ENCODE measurements at regions of chr14 and their contacts with region 1.

Region 1: GRCh38 chr14:61269321-61270083 is 11.6 kb downstream of the TMEM30B start:
- DNase-seq: peak; percentile 77 to 91 (median 87)
- H3K4me3 ChIP-seq: peak overlapping the region in 6 of 7 experiments; percentile 47 to 75 (median 59)
- H3K27ac ChIP-seq: no peak overlapping the region
- H3K4me1 ChIP-seq: peaks cover 0 to 5% (median 4%) of the 10 kb centered on the region in 4 experiments
- H3K27me3 ChIP-seq: peaks cover 8 to 38% (median 20%) of the 10 kb centered on the region in 5 experiments

Region 2: DNA sequence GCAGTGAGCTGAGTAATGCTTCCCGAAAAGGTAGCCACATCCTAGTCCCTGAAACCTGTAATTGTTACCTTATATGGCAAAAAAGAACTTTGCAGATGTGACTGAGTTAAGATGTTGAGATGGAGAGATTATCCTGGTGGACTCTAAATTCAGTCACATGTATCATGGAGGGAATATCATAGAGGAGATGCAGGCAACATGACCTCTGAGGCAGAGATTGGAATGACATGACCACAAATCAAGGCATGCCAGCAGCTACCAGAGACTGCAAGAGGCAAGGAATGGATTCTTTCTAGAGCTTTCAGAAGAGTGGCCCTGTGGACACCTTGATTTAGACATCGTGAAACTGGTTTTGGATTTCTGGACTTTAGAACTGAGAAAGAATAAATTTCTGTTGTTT is 270.0 kb before region 1 on chr14:
- CTCF ChIA-PET with region 1: no interaction called
- POLR2A ChIA-PET with region 1: no interaction called
- DNase-seq: no peak
- H3K4me3 ChIP-seq: no peak overlapping the region
- H3K27ac ChIP-seq: no peak overlapping the region
- H3K4me1 ChIP-seq: no peaks in the 10 kb centered on the region
- H3K27me3 ChIP-seq: no peaks in the 10 kb centered on the region

Region 3: DNA sequence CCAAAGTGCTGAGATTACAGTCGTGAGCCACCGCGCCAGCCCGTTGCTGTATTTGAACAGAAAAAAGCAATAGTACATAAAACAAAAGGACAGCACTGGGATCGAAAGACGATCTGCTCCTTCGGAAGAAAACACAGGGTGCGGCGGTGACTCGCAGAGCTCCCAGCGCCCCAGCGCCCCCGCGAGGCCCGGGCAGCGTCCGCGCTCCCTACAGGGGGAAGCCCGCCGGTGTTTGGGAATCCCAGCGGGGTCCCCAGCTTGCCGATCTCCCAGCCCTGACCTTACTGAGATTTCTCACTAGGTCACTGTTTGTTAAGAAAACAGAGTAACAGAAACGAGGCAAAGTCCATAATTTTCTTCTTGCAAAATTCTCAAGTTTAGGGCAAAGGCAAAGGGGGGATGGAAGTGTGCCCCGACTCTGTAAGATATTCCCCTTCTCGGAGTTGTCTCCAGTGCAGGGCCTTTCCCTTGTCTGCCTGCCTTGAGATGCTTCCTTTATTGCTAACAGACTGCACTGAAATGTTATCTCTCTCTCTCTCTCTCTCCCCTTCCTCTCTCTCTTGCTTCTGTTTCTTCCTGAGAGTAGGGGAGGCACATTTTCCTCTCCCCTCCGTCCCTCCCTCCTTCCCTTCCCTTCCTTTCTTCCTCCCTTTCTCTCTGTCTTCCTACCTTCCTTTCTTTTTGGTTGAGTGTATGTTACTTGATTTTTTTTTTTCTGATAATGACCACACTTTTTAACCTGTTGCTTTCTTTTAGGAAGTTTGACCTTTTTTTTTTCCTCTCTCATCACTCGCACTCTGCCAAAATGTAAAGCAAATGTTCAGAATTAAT is 80.3 kb before region 1 on chr14:
- CTCF ChIA-PET with region 1: no interaction called
- POLR2A ChIA-PET with region 1: no interaction called
- DNase-seq: peak; percentile 20 to 45 (median 38)
- H3K4me3 ChIP-seq: peak overlapping the region in 4 of 7 experiments; percentile 14 to 45 (median 18)
- H3K27ac ChIP-seq: no peak overlapping the region
- H3K4me1 ChIP-seq: peaks cover 0 to 6% (median 0%) of the 10 kb centered on the region in 4 experiments
- H3K27me3 ChIP-seq: peaks cover 20 to 65% (median 27%) of the 10 kb centered on the region in 5 experiments

Region 4: GRCh38 chr14:61229475-61229888 is 40.0 kb before region 1 on chr14:
- CTCF ChIA-PET with region 1: no interaction called
- POLR2A ChIA-PET with region 1: no interaction called
- DNase-seq: no peak
- H3K4me3 ChIP-seq: no peak overlapping the region
- H3K27ac ChIP-seq: no peak overlapping the region
- H3K4me1 ChIP-seq: no peaks in the 10 kb centered on the region
- H3K27me3 ChIP-seq: peaks cover 0 to 9% (median 3%) of the 10 kb centered on the region in 5 experiments

Region 5: GRCh38 chr14:61244009-61244408 is 25.5 kb before region 1 on chr14:
- CTCF ChIA-PET with region 1: no interaction called
- POLR2A ChIA-PET with region 1: no interaction called
- DNase-seq: no peak
- H3K4me3 ChIP-seq: no peak overlapping the region
- H3K27ac ChIP-seq: no peak overlapping the region
- H3K4me1 ChIP-seq: no peaks in the 10 kb centered on the region
- H3K27me3 ChIP-seq: peaks cover 0 to 8% (median 0%) of the 10 kb centered on the region in 5 experiments

Region 6: DNA sequence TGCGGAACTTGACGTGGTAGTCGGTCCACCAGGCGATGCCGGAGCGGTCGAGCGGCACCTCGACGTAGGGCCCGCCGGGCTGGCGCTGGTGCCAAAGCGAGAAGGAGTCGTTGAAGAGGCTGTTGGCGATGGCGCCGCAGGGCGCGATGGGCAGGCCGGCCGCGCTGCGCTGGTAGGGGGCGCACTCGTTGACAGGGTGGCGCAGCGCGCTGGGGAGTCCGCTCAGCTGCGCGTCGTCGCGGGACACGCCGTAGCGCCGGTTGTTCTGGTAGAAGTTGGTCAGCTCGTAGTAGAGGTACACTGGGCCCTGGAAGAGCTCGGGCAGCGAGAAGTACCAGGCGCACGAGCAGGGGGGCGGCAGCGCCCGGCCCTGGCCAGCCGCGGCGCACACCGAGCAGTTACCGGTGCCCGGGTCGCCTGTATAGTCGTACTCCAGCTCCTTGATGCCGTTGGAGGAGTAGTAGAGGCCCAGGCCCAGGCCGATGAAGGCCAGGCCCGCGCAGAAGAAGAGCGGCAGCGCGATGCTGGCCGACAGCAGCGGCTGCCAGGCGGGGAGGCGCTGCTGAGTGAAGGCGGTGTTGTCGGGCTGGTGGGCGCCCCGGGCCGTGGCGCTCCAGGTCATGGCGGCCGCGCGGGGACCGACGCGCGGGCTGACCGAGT is 11.2 kb after region 1 on chr14:
- CTCF ChIA-PET with region 1: interaction called, 107 read pairs
- POLR2A ChIA-PET with region 1: no interaction called
- DNase-seq: peak; percentile 77 to 87 (median 81)
- H3K4me3 ChIP-seq: peak overlapping the region; percentile 32 to 78 (median 61)
- H3K27ac ChIP-seq: no peak overlapping the region
- H3K4me1 ChIP-seq: peaks cover 0 to 23% (median 17%) of the 10 kb centered on the region in 4 experiments
- H3K27me3 ChIP-seq: peaks cover 14 to 38% (median 28%) of the 10 kb centered on the region in 5 experiments

Measured in common myeloid progenitor, CD34-positive (primary cell).